K562 (cell line): ENCODE measurements at regions of chr1 and their contacts with region 1.

Region 1: DNA sequence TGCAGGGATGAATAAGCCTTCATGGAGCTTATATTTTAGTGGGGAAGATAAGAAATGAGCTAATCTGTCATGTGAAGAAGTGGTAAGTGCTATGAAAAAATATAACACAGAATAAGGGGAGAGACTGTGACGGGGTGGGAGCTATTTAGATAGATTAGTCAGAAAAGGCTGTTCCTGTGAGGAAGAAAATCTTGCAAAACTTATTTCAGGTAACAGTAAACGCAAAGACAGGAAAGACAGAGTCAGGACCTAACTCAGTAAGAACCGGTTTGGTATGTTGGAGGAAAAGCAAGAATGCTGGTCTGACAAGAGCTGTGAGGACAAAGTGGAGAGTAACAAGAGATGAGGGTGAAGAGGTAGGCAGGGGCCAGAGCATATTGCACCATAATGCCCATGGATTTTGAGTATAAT is 22.0 kb downstream of the GNAI3 start:
- DNase-seq: no peak
- ATAC-seq: no peak
- H3K4me3 ChIP-seq: no peak overlapping the region
- H3K27ac ChIP-seq: no peak overlapping the region
- H3K4me1 ChIP-seq: no peaks in the 10 kb centered on the region; a peak in 1 of 5 replicates
- H3K27me3 ChIP-seq: no peaks in the 10 kb centered on the region
- CTCF ChIP-seq: no peak
- EP300 ChIP-seq: no peak
- POLR2A ChIP-seq: no peak
- RAD21 ChIP-seq: no peak

Region 2: DNA sequence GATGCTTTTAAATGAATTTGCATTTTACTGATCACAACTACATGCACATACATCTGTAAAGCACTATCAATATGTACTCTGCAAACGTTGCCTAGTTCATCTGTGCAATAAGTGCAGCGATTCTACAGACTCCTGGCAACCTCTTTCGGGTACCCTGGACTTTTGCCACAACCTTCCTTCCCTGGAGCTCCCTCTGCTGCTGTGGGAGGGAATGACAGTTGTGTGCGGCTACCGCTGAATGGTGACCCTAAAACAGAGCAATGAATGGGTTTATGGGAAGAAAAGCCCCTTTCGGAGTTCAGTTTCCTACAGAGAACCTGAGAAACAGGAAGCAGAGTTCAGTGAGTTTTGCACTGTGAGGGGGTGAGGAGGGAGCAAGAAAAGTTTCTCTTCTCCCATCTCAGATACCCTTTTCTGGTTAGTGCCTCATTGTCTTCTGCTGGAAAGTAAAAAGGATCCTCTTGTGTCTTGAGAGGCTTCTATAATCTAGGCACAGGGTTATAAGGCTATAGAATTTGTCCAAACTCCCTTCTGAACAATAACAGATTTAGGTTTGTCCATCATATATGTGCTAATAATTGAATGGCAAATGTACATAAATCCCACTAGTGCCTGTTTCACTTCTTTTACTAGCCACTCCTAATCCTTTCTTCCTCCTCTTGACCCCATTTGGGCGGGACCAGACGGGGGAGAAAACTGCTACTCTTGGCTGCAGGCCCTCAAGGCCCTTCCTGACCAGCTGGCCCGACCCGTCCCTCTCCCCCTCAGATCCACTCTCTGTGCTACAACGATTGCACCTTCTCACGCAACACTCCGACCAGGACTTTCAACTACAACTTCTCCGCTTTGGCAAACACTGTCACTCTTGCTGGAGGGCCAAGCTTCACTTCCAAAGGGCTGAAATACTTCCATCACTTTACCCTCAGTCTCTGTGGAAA is 376.5 kb before region 1 on chr1:
- CTCF ChIA-PET with region 1: no interaction called
- POLR2A ChIA-PET with region 1: no interaction called
- in situ Hi-C with region 1: no loop called
- intact Hi-C with region 1: no loop called
- DNase-seq: peak; percentile 83 to 87 (median 84)
- ATAC-seq: peak; percentile 69
- H3K4me3 ChIP-seq: no peak overlapping the region
- H3K27ac ChIP-seq: no peak overlapping the region
- H3K4me1 ChIP-seq: peaks cover 19 to 50% of the 10 kb centered on the region in 2 experiments
- H3K27me3 ChIP-seq: no peaks in the 10 kb centered on the region
- CTCF ChIP-seq: peak; percentile 93 to 98 (median 94)
- EP300 ChIP-seq: no peak
- POLR2A ChIP-seq: no peak
- RAD21 ChIP-seq: peak; percentile 86 to 89

Region 3: GRCh38 chr1:109559995-109560394 is 10.4 kb before region 1 on chr1:
- CTCF ChIA-PET with region 1: no interaction called
- POLR2A ChIA-PET with region 1: interaction called, 10 read pairs
- in situ Hi-C with region 1: no loop called
- intact Hi-C with region 1: no loop called
- DNase-seq: no peak
- ATAC-seq: no peak
- H3K4me3 ChIP-seq: no peak overlapping the region
- H3K27ac ChIP-seq: no peak overlapping the region
- H3K4me1 ChIP-seq: peaks cover 4 to 17% of the 10 kb centered on the region in 2 experiments
- H3K27me3 ChIP-seq: no peaks in the 10 kb centered on the region
- CTCF ChIP-seq: no peak
- EP300 ChIP-seq: no peak
- POLR2A ChIP-seq: no peak
- RAD21 ChIP-seq: no peak

Region 4: GRCh38 chr1:109761227-109762038 is 191.0 kb after region 1 on chr1:
- CTCF ChIA-PET with region 1: no interaction called
- POLR2A ChIA-PET with region 1: no interaction called
- in situ Hi-C with region 1: no loop called
- intact Hi-C with region 1: no loop called
- DNase-seq: no peak
- ATAC-seq: no peak
- H3K4me3 ChIP-seq: no peak overlapping the region
- H3K27ac ChIP-seq: no peak overlapping the region
- H3K4me1 ChIP-seq: peaks cover 19 to 29% of the 10 kb centered on the region in 2 experiments
- H3K27me3 ChIP-seq: no peaks in the 10 kb centered on the region
- CTCF ChIP-seq: no peak
- EP300 ChIP-seq: no peak
- POLR2A ChIP-seq: no peak
- RAD21 ChIP-seq: no peak